ENCODE measurements at regions of chr4 and their contacts with region 1.

Region 1: DNA sequence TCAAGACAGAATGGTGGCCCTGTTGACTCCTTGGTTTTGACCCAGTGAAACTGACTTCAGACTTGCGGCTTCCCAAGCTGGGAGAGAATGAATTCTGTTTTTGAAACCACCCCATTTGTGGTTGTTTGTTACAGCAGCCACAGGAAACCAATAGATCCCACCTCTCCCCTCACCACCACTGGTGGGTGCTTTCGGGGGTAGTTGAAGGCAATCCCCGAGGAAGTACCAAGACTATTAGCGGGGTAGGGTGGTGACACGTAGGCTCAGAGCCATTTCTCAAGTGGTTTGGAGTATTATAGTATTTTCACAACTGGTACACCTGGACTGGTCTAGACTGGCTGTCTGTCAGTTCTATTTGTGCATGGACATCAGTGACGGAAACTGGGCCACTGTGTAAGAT is 189.1 kb upstream of the RBPJ start:
- DNase-seq: peak; percentile 39
- CTCF ChIP-seq: no peak

Region 2: DNA sequence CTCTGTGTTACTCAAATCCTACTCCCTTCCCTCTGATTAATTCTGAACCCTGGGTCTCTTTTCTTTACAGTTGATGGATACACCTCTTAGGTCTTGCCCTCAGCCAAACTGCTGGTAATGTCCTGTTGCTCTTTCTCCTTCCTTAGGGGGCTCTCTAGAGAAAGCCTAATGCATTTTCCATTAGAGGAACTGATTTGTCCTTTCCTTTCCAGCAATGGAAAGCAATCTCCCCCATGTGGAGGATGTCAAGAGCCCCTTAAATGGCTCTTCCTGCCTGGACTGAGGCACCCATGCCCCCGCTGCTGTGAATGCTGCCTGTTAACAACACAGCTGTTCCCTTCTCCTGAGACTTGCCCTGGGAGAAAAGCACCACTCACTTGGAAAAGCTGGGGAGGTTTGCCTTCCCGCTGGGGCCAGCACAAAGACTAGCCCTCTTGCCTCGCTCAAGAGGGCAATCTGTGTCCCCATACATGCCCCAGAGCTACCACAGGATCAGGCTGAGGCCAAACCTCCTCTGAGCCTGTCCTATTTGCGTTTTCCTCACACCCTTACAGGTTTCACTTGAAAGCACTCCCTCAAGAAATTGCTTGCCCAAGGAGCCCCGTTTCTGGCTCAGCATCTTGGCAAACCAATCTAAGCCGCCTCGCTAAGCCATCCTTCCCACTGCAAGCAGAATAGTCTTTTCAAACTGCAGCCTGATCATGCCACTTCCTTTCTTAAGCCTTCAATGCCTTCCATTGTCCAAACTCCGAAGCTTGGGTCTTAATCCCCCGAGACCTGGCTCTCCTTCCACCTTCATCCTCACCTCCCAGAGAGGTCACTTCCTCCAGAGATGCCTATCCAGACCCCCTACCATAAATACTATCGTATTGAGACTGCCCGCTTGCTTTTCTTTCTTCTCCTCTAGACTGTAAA is 240.9 kb before region 1 on chr4:
- CTCF ChIA-PET with region 1: no interaction called
- POLR2A ChIA-PET with region 1: no interaction called
- DNase-seq: no peak
- CTCF ChIP-seq: no peak

Region 3: DNA sequence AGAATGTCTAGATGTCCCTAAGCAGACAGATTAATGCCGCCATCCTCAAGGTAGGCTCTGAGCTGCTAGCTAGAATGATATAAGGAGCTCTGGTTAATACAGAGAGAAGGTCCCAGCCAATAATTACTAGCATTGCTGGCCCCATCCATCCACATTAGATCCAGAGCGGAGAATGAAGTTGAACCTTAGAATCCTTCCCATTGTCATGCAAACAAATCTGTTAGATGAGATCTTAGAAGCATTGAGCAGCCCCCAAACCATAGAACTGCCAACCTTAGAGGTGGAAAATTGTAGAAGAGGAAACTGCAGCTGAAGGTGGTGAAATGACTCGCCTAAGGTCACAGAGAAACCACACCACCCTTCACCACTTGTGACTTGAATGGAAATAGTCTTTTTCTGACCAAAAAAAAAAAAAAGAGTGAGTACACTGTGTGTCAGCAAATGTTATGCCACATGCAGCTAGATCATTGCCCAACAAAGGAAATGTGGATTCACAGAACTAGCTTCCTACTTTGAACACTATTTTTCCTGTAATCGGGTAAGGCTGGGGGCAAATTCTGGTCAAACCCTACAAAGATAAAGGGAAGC is 55.6 kb before region 1 on chr4:
- CTCF ChIA-PET with region 1: interaction called, 14 read pairs
- POLR2A ChIA-PET with region 1: no interaction called
- DNase-seq: peak; percentile 50
- CTCF ChIP-seq: no peak

Region 4: DNA sequence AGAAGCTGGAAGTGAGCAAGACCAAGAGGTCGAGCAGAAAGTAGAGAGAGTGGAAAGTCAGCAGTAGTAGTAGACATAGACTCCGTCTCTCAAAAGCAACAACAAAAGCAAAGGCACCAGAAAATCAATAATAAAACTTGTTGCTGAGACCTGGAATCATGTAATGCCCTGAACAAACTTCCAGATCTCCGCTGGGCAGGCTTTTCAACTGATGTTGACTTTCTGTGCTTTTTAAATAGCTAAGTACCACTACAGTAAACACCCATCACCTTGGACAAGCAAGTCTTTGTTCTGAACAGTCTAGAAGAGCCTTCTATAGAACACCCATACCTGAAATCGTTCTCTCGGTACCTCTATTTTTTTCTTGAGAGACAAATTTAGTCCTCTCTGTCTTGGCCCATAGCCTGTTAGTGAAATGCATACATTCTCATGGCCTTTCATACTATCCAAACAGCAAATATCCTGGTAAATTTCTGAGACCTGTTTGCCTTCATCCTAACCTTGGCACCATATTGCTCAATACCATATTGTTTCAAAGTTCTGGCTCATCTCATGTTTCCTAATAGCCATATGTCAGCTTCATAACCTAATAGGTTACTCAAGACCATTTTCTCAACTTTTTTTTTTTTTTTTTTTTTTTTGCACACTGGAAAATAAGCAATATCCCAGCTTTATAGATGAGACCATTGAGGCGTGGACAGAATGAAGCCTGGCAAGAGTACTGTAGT is 11.4 kb before region 1 on chr4:
- CTCF ChIA-PET with region 1: interaction called, 12 read pairs
- POLR2A ChIA-PET with region 1: no interaction called
- DNase-seq: no peak
- CTCF ChIP-seq: no peak

Region 5: GRCh38 chr4:26144526-26145155 is 12.9 kb after region 1 on chr4:
- CTCF ChIA-PET with region 1: interaction called, 14 read pairs
- POLR2A ChIA-PET with region 1: no interaction called
- DNase-seq: no peak
- CTCF ChIP-seq: no peak

Region 6: GRCh38 chr4:26161030-26161824 is 29.5 kb after region 1 on chr4:
- CTCF ChIA-PET with region 1: interaction called, 11 read pairs
- POLR2A ChIA-PET with region 1: no interaction called
- DNase-seq: no peak
- CTCF ChIP-seq: peak; percentile 28

Measured in GM10248 (cell line).